Heart left ventricle (tissue), 16 donors: ENCODE measurements at regions of chr2 and their contacts with region 1.

Region 1: GRCh38 chr2:190596993-190597392 is 51.9 kb upstream of the NAB1 start:
- DNase-seq: peak; percentile 51 to 68 (median 58)
- ATAC-seq: peak in 3 of 4 donors; percentile 42 to 63 (median 62)
- H3K4me3 ChIP-seq: no peak overlapping the region
- H3K27ac ChIP-seq: peak overlapping the region in 10 of 12 donors; percentile 8 to 62 (median 28)
- H3K4me1 ChIP-seq: peaks cover 0 to 24% (median 3%) of the 10 kb centered on the region in 12 donors
- H3K27me3 ChIP-seq: no peaks in the 10 kb centered on the region
- CTCF ChIP-seq: no peak
- POLR2A ChIP-seq: no peak

Region 2: DNA sequence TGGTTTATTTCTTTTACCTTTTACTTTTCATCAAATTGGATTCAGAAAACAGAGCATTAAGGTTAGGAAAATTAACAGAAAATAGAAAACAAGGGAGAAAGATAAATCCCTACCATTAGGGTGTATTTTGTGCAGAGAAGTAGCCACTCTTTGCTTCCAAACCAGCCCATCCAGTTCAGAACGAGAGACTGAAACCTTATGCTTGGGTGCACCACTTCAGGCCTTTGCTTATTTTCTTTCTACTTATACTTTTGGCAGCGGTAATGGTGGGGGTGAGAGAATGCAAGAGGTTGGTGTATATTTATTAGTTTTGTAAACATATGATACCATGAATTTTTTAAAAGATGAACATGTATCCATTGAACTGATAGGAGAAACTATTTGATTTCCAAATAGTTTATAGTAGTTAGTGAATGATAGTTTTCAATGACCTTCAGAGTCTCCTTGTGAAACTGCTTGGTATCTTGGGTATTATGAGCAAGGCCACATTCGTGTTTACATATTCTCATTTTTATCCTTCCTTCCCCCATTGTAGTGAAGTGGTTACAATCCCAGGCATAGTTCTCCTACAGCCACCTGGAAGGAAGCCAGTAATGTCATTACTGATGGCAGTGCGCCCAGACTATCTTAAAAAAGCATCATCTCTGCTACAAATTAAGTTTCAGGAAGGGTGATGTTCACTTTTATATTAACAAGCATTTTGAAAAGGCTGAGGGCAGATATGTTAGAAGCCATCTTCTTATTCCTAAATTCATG is 128.0 kb before region 1 on chr2:
- intact Hi-C with region 1: no loop called
- DNase-seq: peak; percentile 72 to 87 (median 82)
- ATAC-seq: peak; percentile 82 to 90 (median 86)
- H3K4me3 ChIP-seq: peak overlapping the region in 5 of 12 donors; percentile 7 to 27 (median 7)
- H3K27ac ChIP-seq: peak overlapping the region; percentile 69 to 91 (median 82)
- H3K4me1 ChIP-seq: peaks cover 17 to 59% (median 40%) of the 10 kb centered on the region in 12 donors
- H3K27me3 ChIP-seq: no peaks in the 10 kb centered on the region
- CTCF ChIP-seq: no peak
- POLR2A ChIP-seq: no peak

Region 3: GRCh38 chr2:190607014-190607597 is 10.1 kb after region 1 on chr2:
- intact Hi-C with region 1: loop called in 1 of 10 experiments (anchors 1 kb)
- DNase-seq: no peak
- ATAC-seq: peak in 3 of 4 donors; percentile 66 to 87 (median 69)
- H3K4me3 ChIP-seq: no peak overlapping the region
- H3K27ac ChIP-seq: peak overlapping the region in 1 of 12 donors; percentile 58
- H3K4me1 ChIP-seq: peaks cover 0 to 20% (median 0%) of the 10 kb centered on the region in 12 donors
- H3K27me3 ChIP-seq: no peaks in the 10 kb centered on the region
- CTCF ChIP-seq: no peak
- POLR2A ChIP-seq: no peak